Dorsolateral prefrontal cortex (tissue), 120 donors: ENCODE measurements at regions of chr15 and their contacts with region 1.

Region 1: GRCh38 chr15:64865998-64866520 is 24.3 kb downstream of the PLEKHO2 start:
- DNase-seq: peak in 4 of 10 donors; percentile 49 to 64 (median 56)
- H3K4me3 ChIP-seq: peak overlapping the region in 1 of 59 donors; percentile 0
- H3K27ac ChIP-seq: peak overlapping the region in 58 of 59 donors; percentile 19 to 89 (median 80)
- H3K27me3 ChIP-seq: no peaks in the 10 kb centered on the region
- CTCF ChIP-seq: peak in 1 of 56 donors; percentile 7

Region 2: DNA sequence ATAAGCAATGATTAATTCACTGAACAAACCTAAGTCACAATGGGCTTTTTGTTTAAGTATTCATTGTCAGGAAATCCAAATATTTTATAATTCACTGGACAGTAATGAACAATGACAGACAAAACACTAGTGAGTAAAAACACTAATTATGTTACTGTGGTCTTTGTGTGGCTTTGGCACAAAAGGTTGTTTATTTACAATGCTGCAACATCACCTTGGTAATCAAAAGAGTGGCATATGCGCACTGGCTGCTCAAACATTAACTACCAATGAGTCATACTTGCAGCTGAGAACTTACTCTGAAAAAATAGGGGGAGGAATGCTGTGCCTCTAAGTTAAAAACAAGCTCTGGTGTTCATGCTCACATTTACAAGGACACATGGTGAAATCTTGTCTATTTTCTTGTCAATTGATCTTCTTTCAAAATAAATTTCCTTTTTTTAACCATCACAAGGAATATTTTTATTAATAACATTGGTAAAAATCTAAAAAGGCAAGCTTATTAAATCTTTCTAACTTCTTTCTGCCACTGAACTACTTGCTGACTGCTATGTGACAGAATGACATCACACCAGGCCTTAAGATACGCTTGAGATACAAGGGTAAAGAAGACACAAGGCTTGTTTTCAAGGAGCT is 618.0 kb before region 1 on chr15:
- intact Hi-C with region 1: no loop called
- DNase-seq: peak in 1 of 10 donors; percentile 28
- H3K4me3 ChIP-seq: no peak overlapping the region
- H3K27ac ChIP-seq: peak overlapping the region in 49 of 59 donors; percentile 0 to 81 (median 52)
- H3K27me3 ChIP-seq: no peaks in the 10 kb centered on the region
- CTCF ChIP-seq: no peak

Region 3: GRCh38 chr15:64824929-64825430 is 41.1 kb before region 1 on chr15:
- intact Hi-C with region 1: loop called in 1 of 2 experiments (anchors 5 kb)
- DNase-seq: no peak
- H3K4me3 ChIP-seq: peak overlapping the region; percentile 33 to 79 (median 58)
- H3K27ac ChIP-seq: peak overlapping the region in 2 of 59 donors; percentile 40 to 51
- H3K27me3 ChIP-seq: no peaks in the 10 kb centered on the region
- CTCF ChIP-seq: no peak